ENCODE measurements at regions of chr1 and their contacts with region 1.

Region 1: GRCh38 chr1:66446261-66447001 is 87.5 kb upstream of the SGIP1 start:
- DNase-seq: peak in 2 of 4 donors; percentile 66 to 77
- ATAC-seq: peak; percentile 90
- H3K4me3 ChIP-seq: no peak overlapping the region
- H3K27ac ChIP-seq: peak overlapping the region in 1 of 2 donors; percentile 38
- H3K4me1 ChIP-seq: peaks cover 9 to 14% of the 10 kb centered on the region in 2 donors
- H3K27me3 ChIP-seq: no peaks in the 10 kb centered on the region
- CTCF ChIP-seq: peak; percentile 86

Region 2: DNA sequence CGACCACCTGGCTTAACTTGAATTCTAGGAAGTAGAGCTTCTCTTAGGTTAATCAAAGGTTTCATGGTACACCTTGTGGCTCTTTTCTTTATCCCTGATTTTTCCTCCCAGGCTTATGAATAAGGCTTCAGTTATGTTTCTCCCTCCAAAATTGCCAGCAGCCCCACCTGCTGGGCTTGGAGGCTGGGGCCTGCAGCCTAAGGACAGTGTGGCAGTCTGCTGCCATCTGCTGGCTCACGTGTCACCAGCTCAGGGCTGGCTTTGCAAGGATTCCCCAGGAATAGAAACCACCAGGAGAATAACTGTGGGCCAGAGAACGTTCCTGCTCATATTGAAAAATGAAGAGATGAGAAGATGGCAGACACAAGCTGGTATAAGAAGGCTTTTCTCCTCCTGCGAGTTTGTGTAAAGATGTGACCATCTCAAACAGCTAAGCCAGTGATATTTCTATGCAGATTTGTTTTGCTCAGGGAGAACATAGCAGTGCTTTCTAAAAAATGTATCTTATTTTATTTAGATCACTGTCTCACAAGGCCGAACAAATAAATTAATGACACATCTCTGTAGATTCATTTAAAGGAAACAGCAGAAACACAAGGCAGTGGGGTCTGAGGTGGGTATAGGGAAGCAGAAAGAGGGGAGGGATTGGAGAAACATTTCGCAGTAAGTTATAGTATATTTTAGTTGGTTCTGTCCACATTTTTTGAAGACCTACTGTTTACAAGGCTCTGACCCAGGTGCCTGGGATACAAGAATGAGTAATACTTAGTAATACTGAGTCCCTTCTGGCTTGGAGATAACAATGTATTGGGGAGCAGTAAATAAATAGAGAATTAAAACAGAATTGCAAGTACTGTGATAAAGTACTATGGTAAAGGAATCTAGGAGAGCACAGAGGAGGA is 203.5 kb before region 1 on chr1:
- intact Hi-C with region 1: loop called in 1 of 2 experiments (anchors 10 kb)
- DNase-seq: peak; percentile 81 to 93 (median 86)
- ATAC-seq: peak; percentile 100
- H3K4me3 ChIP-seq: no peak overlapping the region
- H3K27ac ChIP-seq: no peak overlapping the region
- H3K4me1 ChIP-seq: peaks cover 0 to 5% of the 10 kb centered on the region in 2 donors
- H3K27me3 ChIP-seq: no peaks in the 10 kb centered on the region
- CTCF ChIP-seq: peak; percentile 88 to 97

Region 3: DNA sequence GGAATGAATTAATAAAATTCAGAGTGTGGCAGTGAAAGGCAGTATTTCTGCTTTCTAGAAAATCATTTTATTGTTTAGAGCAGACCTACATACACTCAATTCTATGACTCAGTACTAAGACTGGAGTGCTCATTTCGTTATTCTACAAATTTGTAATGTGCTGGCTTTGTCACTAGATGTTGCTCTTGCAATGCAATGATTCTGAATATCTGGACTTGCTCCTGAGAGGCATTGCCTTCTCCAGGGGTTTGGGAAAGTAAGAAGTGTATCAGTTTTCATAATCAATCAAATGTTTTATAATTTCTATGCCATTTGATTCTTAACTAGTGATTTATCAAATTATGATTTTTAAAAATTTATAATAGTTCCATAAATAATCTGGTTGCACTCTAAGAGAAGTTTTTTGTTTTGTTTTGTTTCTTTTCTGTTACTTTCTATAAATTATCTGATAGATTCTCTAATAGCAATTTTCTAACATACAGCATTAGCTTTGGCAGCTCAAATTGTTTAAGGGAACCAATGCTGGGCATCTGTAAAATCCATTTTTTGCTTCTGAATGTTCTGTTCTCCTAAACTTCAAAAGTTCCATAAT is 193.0 kb before region 1 on chr1:
- intact Hi-C with region 1: loop called (anchors 5 to 10 kb)
- DNase-seq: peak in 1 of 4 donors; percentile 72
- ATAC-seq: peak; percentile 96
- H3K4me3 ChIP-seq: no peak overlapping the region
- H3K27ac ChIP-seq: no peak overlapping the region
- H3K4me1 ChIP-seq: peaks cover 0 to 39% of the 10 kb centered on the region in 2 donors
- H3K27me3 ChIP-seq: no peaks in the 10 kb centered on the region
- CTCF ChIP-seq: peak; percentile 55 to 71

Region 4: GRCh38 chr1:66413136-66413837 is 33.1 kb before region 1 on chr1:
- intact Hi-C with region 1: no loop called
- DNase-seq: peak in 1 of 4 donors; percentile 72
- ATAC-seq: no peak
- H3K4me3 ChIP-seq: no peak overlapping the region
- H3K27ac ChIP-seq: no peak overlapping the region
- H3K4me1 ChIP-seq: peaks cover 0 to 33% of the 10 kb centered on the region in 2 donors
- H3K27me3 ChIP-seq: no peaks in the 10 kb centered on the region
- CTCF ChIP-seq: no peak